H1 (cell line): ENCODE measurements at regions of chr10 and their contacts with region 1.

Region 1: GRCh38 chr10:92432596-92432995 is 141.3 kb downstream of the IDE start:
- DNase-seq: no peak
- H3K4me3 ChIP-seq: no peak overlapping the region
- H3K27ac ChIP-seq: no peak overlapping the region
- H3K4me1 ChIP-seq: no peaks in the 10 kb centered on the region
- H3K27me3 ChIP-seq: no peaks in the 10 kb centered on the region
- CTCF ChIP-seq: no peak
- EP300 ChIP-seq: no peak
- POLR2A ChIP-seq: no peak
- RAD21 ChIP-seq: peak in 1 of 2 experiments; percentile 19; a peak in 1 of 4 replicates

Region 2: GRCh38 chr10:92087750-92088395 is 344.7 kb before region 1 on chr10:
- CTCF ChIA-PET with region 1: interaction called, 55 read pairs
- POLR2A ChIA-PET with region 1: no interaction called
- DNase-seq: peak; percentile 38 to 74
- H3K4me3 ChIP-seq: no peak overlapping the region
- H3K27ac ChIP-seq: no peak overlapping the region
- H3K4me1 ChIP-seq: peaks cover 0 to 2% (median 0%) of the 10 kb centered on the region in 4 experiments; a peak in 1 of 7 replicates
- H3K27me3 ChIP-seq: no peaks in the 10 kb centered on the region
- CTCF ChIP-seq: peak; percentile 14 to 96 (median 93)
- EP300 ChIP-seq: no peak
- POLR2A ChIP-seq: no peak
- RAD21 ChIP-seq: peak; percentile 97 to 98

Region 3: GRCh38 chr10:92222603-92223275 is 209.9 kb before region 1 on chr10:
- CTCF ChIA-PET with region 1: interaction called, 11 read pairs
- POLR2A ChIA-PET with region 1: no interaction called
- DNase-seq: no peak
- H3K4me3 ChIP-seq: no peak overlapping the region
- H3K27ac ChIP-seq: no peak overlapping the region
- H3K4me1 ChIP-seq: peaks cover 0 to 3% (median 1%) of the 10 kb centered on the region in 4 experiments; a peak in 2 of 7 replicates
- H3K27me3 ChIP-seq: no peaks in the 10 kb centered on the region
- CTCF ChIP-seq: no peak
- EP300 ChIP-seq: no peak
- POLR2A ChIP-seq: no peak
- RAD21 ChIP-seq: no peak

Region 4: GRCh38 chr10:92407305-92408016 is 25.1 kb before region 1 on chr10:
- CTCF ChIA-PET with region 1: no interaction called
- POLR2A ChIA-PET with region 1: no interaction called
- DNase-seq: no peak
- H3K4me3 ChIP-seq: no peak overlapping the region
- H3K27ac ChIP-seq: no peak overlapping the region
- H3K4me1 ChIP-seq: peaks cover 0 to 13% (median 2%) of the 10 kb centered on the region in 4 experiments; a peak in 4 of 7 replicates
- H3K27me3 ChIP-seq: no peaks in the 10 kb centered on the region
- CTCF ChIP-seq: no peak
- EP300 ChIP-seq: no peak
- POLR2A ChIP-seq: no peak
- RAD21 ChIP-seq: no peak

Region 5: GRCh38 chr10:92419740-92420545 is 12.7 kb before region 1 on chr10:
- CTCF ChIA-PET with region 1: interaction called, 10 read pairs
- POLR2A ChIA-PET with region 1: interaction called, 3 read pairs
- DNase-seq: peak; percentile 51 to 66
- H3K4me3 ChIP-seq: peak overlapping the region; percentile 4 to 55 (median 34); a peak in 7 of 8 replicates
- H3K27ac ChIP-seq: no peak overlapping the region
- H3K4me1 ChIP-seq: peaks cover 3 to 9% (median 7%) of the 10 kb centered on the region in 4 experiments
- H3K27me3 ChIP-seq: peaks cover 0 to 19% (median 9%) of the 10 kb centered on the region in 4 experiments; a peak in 4 of 7 replicates
- CTCF ChIP-seq: peak; percentile 46 to 49 (median 48)
- EP300 ChIP-seq: no peak
- POLR2A ChIP-seq: no peak
- RAD21 ChIP-seq: peak; percentile 20 to 36; a peak in 3 of 4 replicates